B cell (primary cell): ENCODE measurements at regions of chr16 and their contacts with region 1.

Region 1: DNA sequence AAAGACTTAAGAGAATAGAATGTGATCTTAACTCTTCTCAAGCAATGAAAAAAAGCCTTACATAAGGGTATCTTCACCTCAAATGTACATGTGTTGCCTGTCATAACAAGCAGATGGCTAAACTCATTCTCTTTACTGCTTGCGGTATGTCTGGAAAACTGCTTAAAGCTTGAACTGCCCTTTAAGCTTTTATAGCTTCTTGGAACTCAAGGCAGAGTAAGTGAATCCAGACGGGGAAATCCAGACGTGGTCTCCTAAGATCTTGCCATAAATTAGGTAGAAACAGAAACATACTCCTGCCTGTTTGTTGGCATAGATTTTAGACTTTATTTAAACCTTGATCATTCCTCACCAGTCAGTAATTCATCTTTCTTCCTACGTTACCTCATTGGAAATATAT is 19.6 kb downstream of the CLUAP1 start:
- DNase-seq: no peak
- ATAC-seq: no peak
- H3K4me3 ChIP-seq: no peak overlapping the region
- H3K4me3 Mint-ChIP-seq: no peak overlapping the region
- H3K27ac ChIP-seq: no peak overlapping the region
- H3K27ac Mint-ChIP-seq: no peak overlapping the region
- H3K4me1 ChIP-seq: no peaks in the 10 kb centered on the region
- H3K4me1 Mint-ChIP-seq: no peaks in the 10 kb centered on the region
- H3K27me3 ChIP-seq: no peaks in the 10 kb centered on the region
- H3K27me3 Mint-ChIP-seq: no peaks in the 10 kb centered on the region
- CTCF ChIP-seq: no peak

Region 2: DNA sequence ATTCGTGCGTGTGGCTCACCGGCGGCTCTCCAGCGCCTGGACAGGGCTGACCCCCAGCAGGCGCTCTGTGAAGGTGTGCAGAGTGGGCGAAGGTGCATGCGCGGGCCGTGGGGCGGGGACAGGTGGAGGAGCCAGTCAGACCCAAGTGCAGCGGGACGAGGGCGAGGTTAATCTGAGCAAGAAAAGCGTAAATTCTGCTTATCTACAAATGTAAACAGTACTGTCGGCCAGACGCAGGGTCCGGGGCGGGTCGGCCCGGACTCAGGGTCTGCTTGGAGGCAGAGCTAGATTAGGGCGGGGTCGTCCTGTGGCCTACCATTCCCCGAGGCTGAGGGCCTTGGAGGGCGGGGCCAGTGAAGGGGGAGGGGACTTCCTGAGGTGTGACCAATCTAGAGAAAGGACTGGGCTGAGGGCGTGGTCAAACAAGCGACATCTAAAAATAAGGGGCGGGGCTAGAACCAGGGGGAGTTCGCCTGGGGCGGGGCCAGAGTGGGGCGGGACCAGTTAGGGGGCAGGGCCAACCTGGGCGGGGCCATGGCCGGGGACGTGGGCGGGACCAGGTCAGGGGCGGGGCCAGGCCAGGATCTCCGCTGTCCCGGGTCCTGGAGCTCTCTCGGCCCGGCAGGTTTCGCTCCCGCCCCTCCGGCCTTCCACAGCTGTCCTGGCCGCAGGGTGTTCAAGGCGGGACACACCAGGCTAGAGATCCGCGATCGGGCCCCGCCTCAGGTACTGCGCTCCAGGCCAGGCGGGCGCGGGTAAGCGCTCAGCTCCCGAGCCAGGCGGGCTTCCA is 1437.5 kb after region 1 on chr16 and contains the start of gene SEC14L5:
- CTCF ChIA-PET with region 1: no interaction called
- POLR2A ChIA-PET with region 1: no interaction called
- intact Hi-C with region 1: loop called (anchors 10 kb)
- DNase-seq: peak; percentile 86
- ATAC-seq: peak; percentile 93
- H3K4me3 ChIP-seq: peak within 1 kb of the TSS in 3 of 5 experiments; percentile 37 to 47 (median 46)
- H3K4me3 Mint-ChIP-seq: peak within 1 kb of the TSS; percentile 85
- H3K27ac ChIP-seq: no peak within 1 kb of the TSS
- H3K27ac Mint-ChIP-seq: peak within 1 kb of the TSS; percentile 32
- H3K4me1 ChIP-seq: peaks cover 15% of the 10 kb centered on the region in 2 donors
- H3K4me1 Mint-ChIP-seq: peaks cover 19% of the 10 kb centered on the region
- H3K27me3 ChIP-seq: peaks cover 0 to 58% (median 23%) of the 10 kb centered on the region in 4 experiments
- H3K27me3 Mint-ChIP-seq: peaks cover 54% of the 10 kb centered on the region
- CTCF ChIP-seq: no peak
- total RNA-seq, gene SEC14L5: not detected in 2 replicates